ENCODE measurements at regions of chr6 and their contacts with region 1.

Region 1: DNA sequence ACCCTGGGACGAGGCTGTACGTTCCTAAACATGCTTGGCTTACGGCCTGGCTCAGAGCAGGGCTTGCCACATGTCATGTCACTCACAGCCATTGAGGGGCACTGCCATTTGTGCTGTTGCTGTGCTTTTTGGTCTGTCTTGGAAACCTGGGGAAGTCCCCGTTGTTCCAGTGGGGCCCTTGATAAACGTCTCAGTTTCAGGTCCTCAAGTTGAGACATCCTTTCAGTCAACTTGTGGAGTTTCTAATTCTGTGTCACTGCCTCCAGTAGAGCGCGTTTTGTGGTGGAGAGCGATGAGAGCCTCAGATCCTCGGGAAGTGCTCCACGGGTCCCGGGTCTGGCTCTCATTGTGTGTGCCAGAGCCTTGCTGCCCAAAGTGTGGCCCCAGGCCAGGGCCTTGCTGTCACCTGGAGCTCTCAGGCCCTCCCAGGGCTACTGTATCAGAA is 43.0 kb upstream of the CCR6 start:
- DNase-seq: peak; percentile 89
- H3K4me3 Mint-ChIP-seq: peak overlapping the region; percentile 6
- H3K27ac Mint-ChIP-seq: peak overlapping the region; percentile 54
- H3K4me1 Mint-ChIP-seq: peaks cover 28% of the 10 kb centered on the region
- H3K27me3 Mint-ChIP-seq: peaks cover 1% of the 10 kb centered on the region

Region 2: GRCh38 chr6:167020206-167020605 is 59.7 kb before region 1 on chr6:
- CTCF ChIA-PET with region 1: no interaction called
- POLR2A ChIA-PET with region 1: no interaction called
- intact Hi-C with region 1: no loop called
- DNase-seq: no peak
- H3K4me3 Mint-ChIP-seq: no peak overlapping the region
- H3K27ac Mint-ChIP-seq: no peak overlapping the region
- H3K4me1 Mint-ChIP-seq: peaks cover 3% of the 10 kb centered on the region
- H3K27me3 Mint-ChIP-seq: no peaks in the 10 kb centered on the region

Region 3: DNA sequence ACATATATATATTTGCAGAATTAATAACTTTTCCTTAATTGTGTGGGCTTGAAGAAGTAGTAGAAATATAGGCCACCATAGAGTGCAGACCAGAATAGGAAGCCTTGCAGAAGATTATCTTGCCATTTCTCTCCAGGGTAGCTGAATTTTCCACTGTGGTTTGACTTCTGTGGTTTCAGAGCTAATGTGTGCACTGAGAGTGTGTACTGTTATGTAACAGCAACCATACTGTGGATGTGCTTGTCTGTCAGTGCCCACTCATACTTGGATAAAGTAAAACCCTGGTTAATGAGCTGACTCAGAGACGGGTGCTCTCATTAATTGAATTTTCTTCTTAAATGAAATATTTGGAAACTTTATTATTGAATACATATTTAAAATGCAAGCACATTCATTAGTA is 23.5 kb before region 1 on chr6:
- CTCF ChIA-PET with region 1: interaction called, 4 read pairs
- POLR2A ChIA-PET with region 1: no interaction called
- intact Hi-C with region 1: loop called (anchors 1 kb)
- DNase-seq: peak; percentile 41
- H3K4me3 Mint-ChIP-seq: peak overlapping the region; percentile 43
- H3K27ac Mint-ChIP-seq: peak overlapping the region; percentile 65
- H3K4me1 Mint-ChIP-seq: peaks cover 34% of the 10 kb centered on the region
- H3K27me3 Mint-ChIP-seq: no peaks in the 10 kb centered on the region

Region 4: GRCh38 chr6:167093922-167094432 is 14.1 kb after region 1 on chr6:
- CTCF ChIA-PET with region 1: interaction called, 8 read pairs
- POLR2A ChIA-PET with region 1: interaction called, 5 read pairs
- intact Hi-C with region 1: loop called (anchors 1 kb)
- DNase-seq: peak; percentile 82
- H3K4me3 Mint-ChIP-seq: peak overlapping the region; percentile 55
- H3K27ac Mint-ChIP-seq: peak overlapping the region; percentile 67
- H3K4me1 Mint-ChIP-seq: peaks cover 67% of the 10 kb centered on the region
- H3K27me3 Mint-ChIP-seq: no peaks in the 10 kb centered on the region

Region 5: GRCh38 chr6:167113935-167114910 is 34.3 kb after region 1 on chr6:
- CTCF ChIA-PET with region 1: no interaction called
- POLR2A ChIA-PET with region 1: interaction called, 3 read pairs
- intact Hi-C with region 1: loop called (anchors 1 kb)
- DNase-seq: peak; percentile 90
- H3K4me3 Mint-ChIP-seq: peak overlapping the region; percentile 76
- H3K27ac Mint-ChIP-seq: peak overlapping the region; percentile 94
- H3K4me1 Mint-ChIP-seq: peaks cover 83% of the 10 kb centered on the region
- H3K27me3 Mint-ChIP-seq: no peaks in the 10 kb centered on the region

Region 6: DNA sequence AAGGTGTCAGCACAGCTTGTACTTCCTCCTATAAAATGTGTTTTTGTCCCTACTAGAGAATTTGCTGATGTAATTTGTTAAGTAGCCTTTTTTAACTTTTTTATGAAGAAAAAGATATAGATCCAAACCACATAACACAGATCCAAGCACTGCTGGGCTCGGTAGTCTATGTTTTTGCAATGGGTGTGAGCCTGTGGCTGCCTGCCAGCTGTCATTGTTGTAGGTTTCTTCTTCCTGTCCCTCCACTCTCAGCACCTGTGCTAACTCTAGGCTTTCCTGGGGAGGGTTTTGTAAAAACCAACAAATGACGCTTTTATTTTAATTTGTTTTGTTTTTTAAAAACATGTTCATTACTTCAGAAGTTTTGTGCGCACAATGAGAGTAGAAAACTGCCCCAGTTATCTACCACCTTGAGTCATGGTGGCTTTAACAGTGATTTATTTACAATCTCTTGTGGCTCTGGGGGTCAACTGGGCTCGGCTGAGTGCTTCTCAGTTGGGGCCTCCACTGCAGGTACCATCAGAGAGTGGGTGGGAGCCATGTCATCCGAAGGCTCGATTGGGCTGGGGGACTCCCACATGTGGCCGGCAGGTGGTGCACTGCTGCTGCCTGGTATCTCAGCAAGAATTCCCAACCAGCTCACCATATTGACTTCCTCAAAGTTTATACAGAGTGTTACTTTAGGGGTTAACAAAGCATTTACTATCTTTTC is 40.0 kb after region 1 on chr6:
- CTCF ChIA-PET with region 1: interaction called, 3 read pairs
- POLR2A ChIA-PET with region 1: no interaction called
- intact Hi-C with region 1: loop called (anchors 1 kb)
- DNase-seq: peak; percentile 55
- H3K4me3 Mint-ChIP-seq: no peak overlapping the region
- H3K27ac Mint-ChIP-seq: peak overlapping the region; percentile 72
- H3K4me1 Mint-ChIP-seq: peaks cover 87% of the 10 kb centered on the region
- H3K27me3 Mint-ChIP-seq: no peaks in the 10 kb centered on the region

Region 7: GRCh38 chr6:167141667-167142432 is 62.0 kb after region 1 on chr6:
- CTCF ChIA-PET with region 1: no interaction called
- POLR2A ChIA-PET with region 1: no interaction called
- intact Hi-C with region 1: loop called (anchors 1 kb)
- DNase-seq: peak; percentile 71
- H3K4me3 Mint-ChIP-seq: no peak overlapping the region
- H3K27ac Mint-ChIP-seq: no peak overlapping the region
- H3K4me1 Mint-ChIP-seq: peaks cover 37% of the 10 kb centered on the region
- H3K27me3 Mint-ChIP-seq: no peaks in the 10 kb centered on the region

Region 8: GRCh38 chr6:167153521-167153959 is 73.7 kb after region 1 on chr6:
- CTCF ChIA-PET with region 1: no interaction called
- POLR2A ChIA-PET with region 1: no interaction called
- intact Hi-C with region 1: loop called (anchors 2 kb)
- DNase-seq: peak; percentile 43
- H3K4me3 Mint-ChIP-seq: peak overlapping the region; percentile 8
- H3K27ac Mint-ChIP-seq: no peak overlapping the region
- H3K4me1 Mint-ChIP-seq: peaks cover 24% of the 10 kb centered on the region
- H3K27me3 Mint-ChIP-seq: peaks cover 2% of the 10 kb centered on the region

Region 9: GRCh38 chr6:167401525-167402194 is 321.8 kb after region 1 on chr6:
- CTCF ChIA-PET with region 1: no interaction called
- POLR2A ChIA-PET with region 1: no interaction called
- intact Hi-C with region 1: no loop called
- DNase-seq: no peak
- H3K4me3 Mint-ChIP-seq: no peak overlapping the region
- H3K27ac Mint-ChIP-seq: no peak overlapping the region
- H3K4me1 Mint-ChIP-seq: no peaks in the 10 kb centered on the region
- H3K27me3 Mint-ChIP-seq: peaks cover 11% of the 10 kb centered on the region

Region 10: GRCh38 chr6:167469672-167470071 is 389.8 kb after region 1 on chr6:
- CTCF ChIA-PET with region 1: no interaction called
- POLR2A ChIA-PET with region 1: no interaction called
- intact Hi-C with region 1: no loop called
- DNase-seq: no peak
- H3K4me3 Mint-ChIP-seq: no peak overlapping the region
- H3K27ac Mint-ChIP-seq: no peak overlapping the region
- H3K4me1 Mint-ChIP-seq: peaks cover 2% of the 10 kb centered on the region
- H3K27me3 Mint-ChIP-seq: no peaks in the 10 kb centered on the region

Measured in activated CD4-positive, alpha-beta memory T cell treated with anti-CD3 and anti-CD28 coated beads for 36 hours (primary cell).